Right ventricle myocardium superior (tissue), 1 donor: ENCODE measurements at regions of chr16 and their contacts with region 1.

Region 1: GRCh38 chr16:70653809-70654771 is 7.7 kb downstream of the IL34 start:
- DNase-seq: peak; percentile 72
- ATAC-seq: peak; percentile 88

Region 2: DNA sequence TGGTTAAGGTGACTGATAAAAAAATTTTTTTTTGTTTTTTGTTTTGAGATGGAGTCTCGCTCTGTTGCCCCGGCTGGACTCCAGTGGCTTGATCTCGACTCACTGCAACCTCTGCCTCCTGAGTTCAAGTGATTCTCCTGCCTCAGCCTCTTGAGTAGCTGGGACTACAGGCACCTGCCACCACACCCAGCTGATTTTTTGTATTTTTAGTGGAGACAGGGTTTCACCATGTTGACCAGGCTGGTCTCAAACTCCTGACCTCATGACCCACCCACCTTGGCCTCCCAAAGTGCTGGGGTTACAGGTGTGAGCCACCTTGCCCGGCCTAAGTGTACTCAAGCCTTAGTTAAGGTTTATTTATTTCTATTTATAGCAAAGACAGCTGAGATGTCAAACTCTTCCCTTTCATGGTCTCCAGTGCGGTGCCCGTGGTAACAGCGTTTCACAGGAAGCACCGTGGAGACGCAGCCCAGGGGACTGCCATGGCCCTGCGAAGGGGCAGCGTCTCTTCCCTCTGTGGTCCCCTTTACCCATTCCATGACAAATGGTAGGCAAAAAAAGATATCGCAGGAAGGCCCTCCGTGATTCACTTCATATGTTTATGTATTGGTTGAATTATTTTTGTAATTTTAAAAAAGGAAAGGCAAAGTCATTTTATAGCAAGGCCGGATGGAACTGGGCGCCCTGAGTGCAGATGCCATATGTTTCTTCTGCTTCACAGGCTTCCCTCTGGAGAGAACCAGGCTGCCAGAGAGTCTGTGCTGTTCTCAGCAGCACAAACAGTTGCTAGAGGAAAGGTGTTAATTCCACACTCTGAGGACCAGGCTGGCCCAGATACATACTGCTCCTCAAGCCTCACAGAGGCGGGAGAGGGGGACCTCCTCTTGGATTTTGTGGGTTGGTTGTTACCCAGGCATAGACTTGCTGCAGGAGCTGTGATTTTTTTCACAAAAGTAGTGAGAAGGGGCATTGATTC is 278.2 kb before region 1 on chr16:
- intact Hi-C with region 1: loop called (anchors 10 kb)
- DNase-seq: no peak
- ATAC-seq: no peak

Region 3: DNA sequence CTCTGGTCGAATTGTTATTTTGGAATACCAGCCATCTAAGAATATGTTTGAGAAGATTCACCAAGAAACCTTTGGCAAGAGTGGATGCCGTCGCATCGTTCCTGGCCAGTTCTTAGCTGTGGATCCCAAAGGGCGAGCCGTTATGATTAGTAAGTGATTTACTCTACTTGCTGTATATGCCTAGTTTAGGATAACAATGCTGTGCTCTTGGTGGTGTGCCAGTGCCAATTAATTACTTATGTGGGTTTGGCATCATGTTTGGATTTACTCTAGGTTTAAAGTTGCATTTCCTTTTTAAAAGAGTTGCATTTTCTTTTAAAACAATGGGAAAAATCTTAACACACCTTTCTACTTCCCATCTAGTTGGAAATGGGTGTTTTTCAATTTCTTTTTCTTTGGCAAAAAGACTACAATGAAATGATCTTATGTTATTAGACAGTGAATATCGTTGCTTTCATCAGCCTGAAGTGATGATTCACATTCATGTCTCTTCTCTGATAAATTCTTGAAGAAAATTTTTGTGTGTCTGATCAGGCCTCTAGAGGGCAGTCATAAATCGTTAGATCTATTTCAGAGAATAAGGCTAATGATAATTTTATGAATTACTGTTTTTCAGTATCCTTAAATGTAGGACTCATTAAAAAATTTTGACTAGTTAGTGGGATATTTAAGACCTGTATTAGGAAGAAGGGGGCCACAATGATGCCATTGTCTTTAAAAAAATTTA is 124.9 kb before region 1 on chr16:
- intact Hi-C with region 1: loop called (anchors 5 kb)
- DNase-seq: no peak
- ATAC-seq: no peak